ENCODE measurements at regions of chr10 and their contacts with region 1.

Region 1: DNA sequence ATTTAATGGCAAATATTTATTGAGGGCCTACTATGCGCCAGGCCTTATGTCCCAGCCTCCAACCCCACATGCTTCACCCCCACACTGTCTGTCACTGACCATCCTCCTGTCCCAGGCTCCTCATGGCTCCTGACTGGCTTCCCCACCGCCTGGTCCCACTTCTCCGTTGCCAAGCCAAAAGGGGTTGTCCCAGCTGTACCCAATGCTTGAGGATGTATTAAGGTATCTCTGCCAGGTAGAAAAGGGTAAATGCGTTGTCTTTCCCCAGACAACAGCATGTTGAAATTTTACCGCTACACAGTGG is 168.8 kb upstream of the FRMD4A start:
- DNase-seq: no peak
- H3K4me3 ChIP-seq: no peak overlapping the region
- H3K27ac ChIP-seq: peak overlapping the region in 1 of 4 donors; percentile 55
- H3K4me1 ChIP-seq: peaks cover 3 to 18% (median 9%) of the 10 kb centered on the region in 4 donors
- H3K27me3 ChIP-seq: no peaks in the 10 kb centered on the region
- CTCF ChIP-seq: no peak
- EP300 ChIP-seq: no peak
- POLR2A ChIP-seq: no peak

Region 2: DNA sequence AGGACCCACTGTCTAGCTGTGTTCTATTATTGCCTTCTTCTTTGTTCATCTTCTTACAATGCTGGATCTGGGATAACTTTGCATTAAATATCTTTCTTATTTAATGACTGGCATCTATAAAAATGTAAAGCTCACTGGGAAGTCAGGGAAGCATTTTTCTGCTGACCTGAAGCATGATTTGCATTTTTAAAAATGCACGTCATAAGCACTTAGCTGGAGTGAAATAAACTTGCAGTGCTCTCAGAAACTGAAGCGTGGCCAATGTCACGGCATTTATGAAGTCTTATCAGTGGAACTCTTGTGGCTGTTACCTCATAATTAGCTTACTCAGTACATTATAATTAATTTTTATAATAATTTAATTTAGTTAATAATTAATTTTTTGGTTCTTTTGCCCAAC is 227.9 kb before region 1 on chr10:
- intact Hi-C with region 1: no loop called
- DNase-seq: no peak
- H3K4me3 ChIP-seq: no peak overlapping the region
- H3K27ac ChIP-seq: no peak overlapping the region
- H3K4me1 ChIP-seq: no peaks in the 10 kb centered on the region
- H3K27me3 ChIP-seq: no peaks in the 10 kb centered on the region
- CTCF ChIP-seq: no peak
- EP300 ChIP-seq: no peak
- POLR2A ChIP-seq: no peak

Region 3: GRCh38 chr10:14486777-14487487 is 12.6 kb before region 1 on chr10:
- intact Hi-C with region 1: no loop called
- DNase-seq: no peak
- H3K4me3 ChIP-seq: peak overlapping the region in 2 of 4 donors; percentile 13 to 19
- H3K27ac ChIP-seq: no peak overlapping the region
- H3K4me1 ChIP-seq: peaks cover 0 to 21% (median 16%) of the 10 kb centered on the region in 4 donors
- H3K27me3 ChIP-seq: no peaks in the 10 kb centered on the region
- CTCF ChIP-seq: no peak
- EP300 ChIP-seq: no peak
- POLR2A ChIP-seq: no peak

Region 4: DNA sequence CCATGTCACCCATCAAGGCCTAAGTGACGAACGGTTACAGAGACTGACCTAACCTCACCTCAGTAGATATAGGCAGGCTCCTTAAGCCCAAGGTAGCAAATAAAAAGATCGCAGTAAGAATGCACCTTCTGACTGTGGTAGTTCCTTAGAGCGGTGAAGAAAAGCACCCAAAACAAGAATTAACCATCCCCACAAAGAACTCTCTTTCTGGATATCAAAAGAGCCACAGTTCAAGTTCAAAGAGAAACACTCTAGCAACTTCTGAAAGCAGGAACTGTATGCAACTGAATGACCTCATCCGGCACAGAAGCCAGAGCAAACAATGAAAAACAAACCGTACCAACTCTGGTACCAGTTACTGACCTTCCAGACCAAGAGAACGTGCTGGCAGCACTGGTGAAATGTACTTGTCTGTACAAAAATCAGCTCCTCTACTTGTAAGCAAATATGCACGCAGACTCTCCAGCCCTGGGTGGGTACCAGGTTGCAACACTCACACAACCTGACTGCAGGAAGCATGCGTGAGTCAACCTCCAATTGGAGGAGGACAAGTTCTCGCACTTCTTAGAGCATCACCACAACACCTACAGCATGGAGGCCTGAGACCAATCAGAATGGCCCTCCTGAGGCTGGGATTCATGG is 72.4 kb after region 1 on chr10:
- intact Hi-C with region 1: no loop called
- DNase-seq: no peak
- H3K4me3 ChIP-seq: no peak overlapping the region
- H3K27ac ChIP-seq: no peak overlapping the region
- H3K4me1 ChIP-seq: no peaks in the 10 kb centered on the region
- H3K27me3 ChIP-seq: no peaks in the 10 kb centered on the region
- CTCF ChIP-seq: no peak
- EP300 ChIP-seq: no peak
- POLR2A ChIP-seq: no peak

Region 5: GRCh38 chr10:14648005-14648765 is 148.6 kb after region 1 on chr10:
- intact Hi-C with region 1: no loop called
- DNase-seq: no peak
- H3K4me3 ChIP-seq: peak overlapping the region in 2 of 4 donors; percentile 0 to 22
- H3K27ac ChIP-seq: peak overlapping the region; percentile 53 to 75 (median 66)
- H3K4me1 ChIP-seq: peaks cover 9 to 25% (median 22%) of the 10 kb centered on the region in 4 donors
- H3K27me3 ChIP-seq: no peaks in the 10 kb centered on the region
- CTCF ChIP-seq: no peak
- EP300 ChIP-seq: no peak
- POLR2A ChIP-seq: no peak

Region 6: DNA sequence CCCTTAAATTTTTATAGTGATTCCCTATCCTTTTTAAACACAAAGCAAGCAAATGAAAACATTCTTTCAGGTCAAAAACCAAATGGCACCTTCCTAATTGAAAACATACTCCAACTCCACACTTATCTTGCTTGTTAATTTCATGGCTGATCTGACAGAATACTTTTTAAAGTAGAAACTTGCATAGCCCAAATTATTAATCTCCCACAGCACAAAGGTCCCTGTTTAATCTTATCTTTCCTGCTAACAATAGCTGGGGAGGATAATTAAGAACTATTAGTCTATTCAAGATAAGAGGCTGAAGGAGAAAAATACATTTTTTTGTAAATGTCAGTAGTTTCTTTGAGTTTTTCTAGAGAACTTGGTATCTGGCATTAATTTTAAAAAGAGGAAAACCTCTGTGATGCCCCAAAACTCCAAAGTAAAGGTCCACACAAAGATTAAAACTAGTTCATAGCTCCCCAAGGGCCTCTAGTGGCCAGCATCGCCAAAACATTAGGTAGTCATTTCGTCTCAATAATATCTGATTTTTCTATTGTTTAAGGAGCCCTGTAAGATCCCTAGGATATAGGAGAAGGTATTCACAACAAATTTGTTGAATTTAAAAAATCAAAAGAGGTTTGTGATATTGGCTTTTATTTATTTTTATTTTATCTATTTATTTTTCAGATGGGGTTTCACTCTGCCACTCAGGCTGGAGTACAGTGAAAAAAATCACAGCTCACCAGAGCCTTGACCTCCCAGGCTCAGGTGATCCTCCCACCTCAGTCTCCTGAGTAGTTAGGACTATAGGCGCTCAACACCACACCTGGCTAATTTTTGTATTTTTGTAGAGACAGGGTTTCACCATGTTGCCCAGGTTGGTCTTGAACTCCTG is 323.6 kb after region 1 on chr10:
- intact Hi-C with region 1: loop called (anchors 5 kb)
- DNase-seq: no peak
- H3K4me3 ChIP-seq: no peak overlapping the region
- H3K27ac ChIP-seq: no peak overlapping the region
- H3K4me1 ChIP-seq: no peaks in the 10 kb centered on the region
- H3K27me3 ChIP-seq: no peaks in the 10 kb centered on the region
- CTCF ChIP-seq: peak; percentile 42 to 52 (median 51)
- EP300 ChIP-seq: no peak
- POLR2A ChIP-seq: no peak

Region 7: GRCh38 chr10:15106352-15107013 is 606.9 kb after region 1 on chr10:
- intact Hi-C with region 1: loop called (anchors 5 kb)
- DNase-seq: no peak
- H3K4me3 ChIP-seq: no peak overlapping the region
- H3K27ac ChIP-seq: peak overlapping the region in 1 of 4 donors; percentile 5
- H3K4me1 ChIP-seq: peaks cover 0 to 9% (median 6%) of the 10 kb centered on the region in 4 donors
- H3K27me3 ChIP-seq: no peaks in the 10 kb centered on the region
- CTCF ChIP-seq: peak; percentile 73 to 87 (median 85)
- EP300 ChIP-seq: no peak
- POLR2A ChIP-seq: no peak

Measured in esophagus muscularis mucosa (tissue), 4 donors.